ENCODE measurements at regions of chr1 and their contacts with region 1.

Region 1: GRCh38 chr1:223748773-223749733 is 36.7 kb downstream of the CAPN2 start:
- DNase-seq: no peak
- H3K4me3 ChIP-seq: peak overlapping the region; percentile 38
- H3K27ac ChIP-seq: peak overlapping the region; percentile 58
- H3K27me3 ChIP-seq: no peaks in the 10 kb centered on the region
- CTCF ChIP-seq: peak; percentile 87

Region 2: GRCh38 chr1:223628233-223629125 is 120.6 kb before region 1 on chr1:
- CTCF ChIA-PET with region 1: no interaction called
- POLR2A ChIA-PET with region 1: no interaction called
- DNase-seq: peak; percentile 4
- H3K4me3 ChIP-seq: no peak overlapping the region
- H3K27ac ChIP-seq: no peak overlapping the region
- H3K27me3 ChIP-seq: peaks cover 17% of the 10 kb centered on the region
- CTCF ChIP-seq: peak; percentile 49

Region 3: DNA sequence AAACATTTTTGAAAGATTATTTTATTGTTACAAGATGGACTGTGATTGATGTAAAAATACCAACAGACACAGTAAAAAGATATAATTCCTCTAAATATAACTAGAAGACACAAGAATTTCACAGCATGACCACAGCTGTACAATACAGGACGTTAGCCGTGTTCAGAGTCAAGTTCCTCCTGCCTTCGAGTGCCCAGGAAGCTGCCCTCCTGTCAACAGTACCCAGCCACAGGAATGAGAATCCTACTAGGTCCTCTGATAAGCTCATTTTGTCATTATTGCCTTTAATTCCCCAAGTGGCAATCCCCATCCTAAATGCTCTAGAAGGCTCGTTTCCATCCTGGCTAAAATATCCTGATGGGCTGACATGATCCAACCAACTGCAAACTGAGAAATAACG is 53.1 kb before region 1 on chr1:
- CTCF ChIA-PET with region 1: interaction called, 69 read pairs
- POLR2A ChIA-PET with region 1: interaction called, 19 read pairs
- DNase-seq: no peak
- H3K4me3 ChIP-seq: no peak overlapping the region
- H3K27ac ChIP-seq: no peak overlapping the region
- H3K27me3 ChIP-seq: no peaks in the 10 kb centered on the region
- CTCF ChIP-seq: no peak

Region 4: GRCh38 chr1:223707256-223708000 is 41.6 kb before region 1 on chr1:
- CTCF ChIA-PET with region 1: interaction called, 69 read pairs
- POLR2A ChIA-PET with region 1: interaction called, 5 read pairs
- DNase-seq: peak; percentile 98
- H3K4me3 ChIP-seq: peak overlapping the region; percentile 20; the same call in 1 of the 2 replicates
- H3K27ac ChIP-seq: peak overlapping the region; percentile 99
- H3K27me3 ChIP-seq: no peaks in the 10 kb centered on the region
- CTCF ChIP-seq: no peak

Region 5: GRCh38 chr1:223726380-223727001 is 22.6 kb before region 1 on chr1:
- CTCF ChIA-PET with region 1: interaction called, 30 read pairs
- POLR2A ChIA-PET with region 1: interaction called, 15 read pairs
- DNase-seq: peak; percentile 90
- H3K4me3 ChIP-seq: peak overlapping the region; percentile 22; the same call in 1 of the 2 replicates
- H3K27ac ChIP-seq: peak overlapping the region; percentile 91
- H3K27me3 ChIP-seq: no peaks in the 10 kb centered on the region
- CTCF ChIP-seq: no peak

Region 6: DNA sequence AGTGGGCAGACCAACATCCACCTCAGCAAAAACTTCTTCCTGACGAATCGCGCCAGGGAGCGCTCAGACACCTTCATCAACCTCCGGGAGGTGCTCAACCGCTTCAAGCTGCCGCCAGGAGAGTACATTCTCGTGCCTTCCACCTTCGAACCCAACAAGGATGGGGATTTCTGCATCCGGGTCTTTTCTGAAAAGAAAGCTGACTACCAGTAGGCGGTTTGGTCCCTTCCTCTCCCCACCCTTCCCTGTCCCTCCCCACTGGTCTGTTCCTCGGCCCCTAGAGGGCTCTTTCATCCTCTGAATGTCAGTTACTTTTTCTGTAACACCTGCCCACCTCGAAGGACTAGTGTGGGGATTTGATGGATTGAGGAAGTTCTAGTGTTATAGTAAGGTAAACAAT is 10.2 kb after region 1 on chr1:
- CTCF ChIA-PET with region 1: interaction called, 26 read pairs
- POLR2A ChIA-PET with region 1: interaction called, 5 read pairs
- DNase-seq: no peak
- H3K4me3 ChIP-seq: no peak overlapping the region
- H3K27ac ChIP-seq: peak overlapping the region; percentile 39
- H3K27me3 ChIP-seq: no peaks in the 10 kb centered on the region
- CTCF ChIP-seq: no peak

Region 7: GRCh38 chr1:223840254-223840653 is 91.2 kb after region 1 on chr1:
- CTCF ChIA-PET with region 1: interaction called, 11 read pairs
- POLR2A ChIA-PET with region 1: no interaction called
- DNase-seq: no peak
- H3K4me3 ChIP-seq: no peak overlapping the region
- H3K27ac ChIP-seq: no peak overlapping the region
- H3K27me3 ChIP-seq: no peaks in the 10 kb centered on the region
- CTCF ChIP-seq: no peak

Region 8: GRCh38 chr1:223870617-223871574 is 121.8 kb after region 1 on chr1:
- CTCF ChIA-PET with region 1: no interaction called
- POLR2A ChIA-PET with region 1: no interaction called
- DNase-seq: no peak
- H3K4me3 ChIP-seq: no peak overlapping the region
- H3K27ac ChIP-seq: no peak overlapping the region
- H3K27me3 ChIP-seq: peaks cover 9% of the 10 kb centered on the region
- CTCF ChIP-seq: no peak